ENCODE measurements at regions of chr17 and their contacts with region 1.

Region 1: GRCh38 chr17:49315551-49316257 is 46.3 kb downstream of the ZNF652 start:
- DNase-seq: peak; percentile 70 to 72
- ATAC-seq: peak; percentile 100

Region 2: DNA sequence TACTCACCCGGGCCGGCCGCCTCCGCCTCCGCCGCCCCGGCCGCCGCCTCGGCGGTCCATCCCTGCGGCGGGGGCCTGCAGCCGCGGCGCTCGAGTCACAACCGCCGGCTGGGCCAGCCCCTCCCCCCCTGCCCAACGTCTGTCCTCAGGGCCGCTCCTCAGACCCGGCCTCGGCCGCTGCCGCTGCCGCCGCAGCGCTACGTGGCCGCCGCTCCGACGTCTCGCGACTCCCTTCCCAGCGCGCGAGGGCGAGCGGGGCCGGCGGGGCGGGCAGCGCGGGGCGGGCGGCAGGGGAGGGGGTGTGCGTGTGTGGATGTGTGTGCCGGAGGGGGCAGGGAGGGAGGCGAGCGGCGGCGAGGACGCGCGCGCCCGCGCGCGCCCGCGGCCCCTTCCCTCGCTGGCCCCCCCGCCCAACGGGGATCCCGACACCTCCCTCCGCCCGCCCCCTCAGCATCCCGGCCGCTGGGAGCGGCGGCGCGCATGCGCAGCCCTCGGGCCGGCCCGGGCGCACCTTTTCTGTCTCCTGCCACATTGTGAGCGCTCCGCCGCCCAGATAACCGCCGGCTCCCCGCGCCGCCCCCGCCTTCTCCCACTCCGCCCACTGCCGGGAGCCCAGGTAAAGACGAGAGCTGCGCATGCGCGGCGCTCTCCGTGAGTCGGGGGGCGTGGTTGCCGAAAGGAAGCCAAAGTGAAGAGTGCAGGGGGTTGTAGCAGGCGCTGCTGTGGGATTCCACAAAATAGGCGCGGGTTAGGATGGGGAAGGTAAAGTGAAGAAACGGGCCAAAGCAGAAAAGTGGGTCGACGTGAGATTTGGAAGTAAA is 46.4 kb after region 1 on chr17 and contains the start of gene ZNF652:
- intact Hi-C with region 1: no loop called
- DNase-seq: peak; percentile 95 to 96
- ATAC-seq: peak; percentile 87
- total RNA-seq, gene ZNF652: 52.4 to 53.2 TPM

Region 3: DNA sequence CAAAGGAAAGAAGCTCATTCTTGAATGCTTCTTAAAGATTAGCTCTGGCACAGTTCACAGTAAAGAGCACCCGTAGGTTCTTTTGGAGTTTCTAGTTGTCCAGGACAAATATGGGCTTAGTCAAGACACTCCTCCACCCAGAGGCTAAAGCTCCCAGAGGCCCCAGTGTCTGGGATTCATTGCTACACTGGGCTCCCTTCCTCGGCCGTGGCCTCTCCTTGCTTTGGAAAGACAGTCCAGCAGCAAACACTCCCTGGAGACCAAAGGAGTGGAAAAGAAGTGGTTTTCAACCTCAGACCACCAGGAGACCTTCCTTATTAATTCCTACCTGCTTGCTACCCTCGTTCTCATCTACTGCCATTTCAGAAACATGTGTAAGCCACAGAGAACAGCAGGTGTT is 81.9 kb after region 1 on chr17:
- intact Hi-C with region 1: loop called in 1 of 2 experiments (anchors 2 kb)
- DNase-seq: no peak
- ATAC-seq: no peak

Measured in left colon (tissue), 2 donors.